Breast epithelium (tissue), 4 donors: ENCODE measurements at regions of chr13 and their contacts with region 1.

Region 1: DNA sequence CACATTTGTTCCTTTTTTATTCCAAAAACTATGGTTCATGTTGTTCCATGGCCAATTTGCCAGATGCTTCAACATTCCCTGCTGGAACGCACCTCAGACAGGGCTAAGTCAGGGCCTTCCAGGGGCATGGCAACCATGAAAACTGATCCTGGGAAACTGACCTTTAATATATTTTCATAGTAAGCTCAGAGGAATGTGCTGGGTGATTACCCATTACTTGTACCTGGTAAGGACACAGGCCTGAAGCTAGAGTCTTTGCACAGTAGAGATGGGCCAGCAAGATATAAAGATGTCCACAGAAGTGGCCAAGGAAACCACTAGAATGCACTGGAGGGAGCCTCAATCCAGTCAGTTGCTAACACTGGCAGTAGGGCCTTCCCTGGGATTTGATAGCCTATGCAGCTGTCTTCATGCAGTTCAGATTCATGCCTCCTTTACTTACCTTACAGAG is 353.1 kb downstream of the ENOX1 start:
- DNase-seq: no peak
- H3K4me3 ChIP-seq: no peak overlapping the region
- H3K27ac ChIP-seq: no peak overlapping the region
- H3K4me1 ChIP-seq: no peaks in the 10 kb centered on the region
- H3K27me3 ChIP-seq: no peaks in the 10 kb centered on the region
- CTCF ChIP-seq: no peak
- POLR2A ChIP-seq: no peak

Region 2: GRCh38 chr13:43422116-43422515 is 11.6 kb before region 1 on chr13:
- intact Hi-C with region 1: loop called (anchors 1 kb)
- DNase-seq: no peak
- H3K4me3 ChIP-seq: no peak overlapping the region
- H3K27ac ChIP-seq: no peak overlapping the region
- H3K4me1 ChIP-seq: no peaks in the 10 kb centered on the region
- H3K27me3 ChIP-seq: no peaks in the 10 kb centered on the region
- CTCF ChIP-seq: no peak
- POLR2A ChIP-seq: no peak

Region 3: DNA sequence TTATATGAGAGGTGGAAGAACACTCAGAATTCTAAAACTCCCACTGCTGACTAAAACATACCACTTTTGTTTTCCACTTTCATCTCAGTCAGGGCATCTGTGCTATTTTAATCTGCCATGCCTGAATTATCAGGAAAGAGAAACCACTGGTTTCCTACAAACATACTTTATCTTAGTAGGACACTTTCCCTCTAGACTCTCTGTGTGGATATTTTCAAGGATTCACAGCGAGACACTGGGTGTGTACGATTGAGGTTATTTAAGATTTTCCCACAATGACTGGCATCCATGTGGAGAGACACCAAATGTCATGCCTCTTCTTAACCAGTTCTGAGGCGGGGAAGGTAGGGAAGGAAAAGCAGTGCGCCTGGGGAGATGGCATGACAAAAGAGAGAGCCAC is 140.9 kb after region 1 on chr13:
- intact Hi-C with region 1: loop called (anchors 5 kb)
- DNase-seq: no peak
- H3K4me3 ChIP-seq: no peak overlapping the region
- H3K27ac ChIP-seq: no peak overlapping the region
- H3K4me1 ChIP-seq: no peaks in the 10 kb centered on the region
- H3K27me3 ChIP-seq: no peaks in the 10 kb centered on the region
- CTCF ChIP-seq: no peak
- POLR2A ChIP-seq: no peak

Region 4: DNA sequence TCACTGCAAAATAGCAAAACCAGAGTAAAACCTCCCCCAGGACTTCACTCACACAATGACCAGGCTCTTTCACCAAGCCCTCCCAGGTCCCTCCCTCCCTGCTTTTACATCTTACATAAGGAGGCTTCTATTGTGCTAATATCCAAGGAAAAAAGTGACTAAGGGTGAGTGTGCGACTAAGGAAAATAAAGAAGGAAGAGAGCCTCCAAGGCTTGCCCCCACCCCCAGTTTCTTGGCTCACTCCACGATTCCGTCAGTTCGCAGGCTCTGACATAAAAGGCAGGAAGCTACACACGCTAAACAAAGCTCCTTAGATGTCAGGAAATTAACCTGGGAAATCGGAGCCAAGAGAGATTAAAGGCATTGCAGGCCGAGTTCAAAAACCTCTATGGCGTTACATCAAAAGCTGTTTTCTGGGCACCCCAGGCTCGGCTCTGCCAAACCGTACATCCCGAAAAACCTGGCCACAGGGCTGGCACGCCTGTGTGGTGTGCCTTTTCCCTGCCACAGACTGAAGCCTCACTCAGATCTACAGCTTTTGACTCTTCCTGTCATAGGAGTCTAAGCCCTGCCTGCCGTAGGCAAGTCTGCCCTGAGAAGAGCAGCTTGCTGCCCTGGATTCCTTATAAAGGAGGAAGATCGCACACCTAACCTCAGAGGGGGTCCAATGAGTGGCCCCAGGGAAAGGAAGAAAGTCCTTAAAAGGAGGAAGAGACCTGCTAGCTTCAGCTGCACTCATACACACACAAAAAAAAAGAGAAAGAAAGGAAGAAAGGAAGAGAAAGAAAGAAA is 872.9 kb after region 1 on chr13:
- intact Hi-C with region 1: no loop called
- DNase-seq: peak in 1 of 2 donors; percentile 66
- H3K4me3 ChIP-seq: peak overlapping the region in 2 of 3 donors; percentile 0 to 27
- H3K27ac ChIP-seq: peak overlapping the region; percentile 88 to 90
- H3K4me1 ChIP-seq: peaks cover 0 to 19% of the 10 kb centered on the region in 2 donors
- H3K27me3 ChIP-seq: no peaks in the 10 kb centered on the region
- CTCF ChIP-seq: no peak
- POLR2A ChIP-seq: no peak